ENCODE measurements at regions of chr6 and their contacts with region 1.

Region 1: GRCh38 chr6:82693094-82693493 is 329.5 kb downstream of the TPBG start:
- DNase-seq: no peak
- H3K4me3 ChIP-seq: no peak overlapping the region
- H3K27ac ChIP-seq: no peak overlapping the region
- H3K4me1 ChIP-seq: no peaks in the 10 kb centered on the region
- H3K27me3 ChIP-seq: no peaks in the 10 kb centered on the region
- CTCF ChIP-seq: no peak
- POLR2A ChIP-seq: no peak

Region 2: DNA sequence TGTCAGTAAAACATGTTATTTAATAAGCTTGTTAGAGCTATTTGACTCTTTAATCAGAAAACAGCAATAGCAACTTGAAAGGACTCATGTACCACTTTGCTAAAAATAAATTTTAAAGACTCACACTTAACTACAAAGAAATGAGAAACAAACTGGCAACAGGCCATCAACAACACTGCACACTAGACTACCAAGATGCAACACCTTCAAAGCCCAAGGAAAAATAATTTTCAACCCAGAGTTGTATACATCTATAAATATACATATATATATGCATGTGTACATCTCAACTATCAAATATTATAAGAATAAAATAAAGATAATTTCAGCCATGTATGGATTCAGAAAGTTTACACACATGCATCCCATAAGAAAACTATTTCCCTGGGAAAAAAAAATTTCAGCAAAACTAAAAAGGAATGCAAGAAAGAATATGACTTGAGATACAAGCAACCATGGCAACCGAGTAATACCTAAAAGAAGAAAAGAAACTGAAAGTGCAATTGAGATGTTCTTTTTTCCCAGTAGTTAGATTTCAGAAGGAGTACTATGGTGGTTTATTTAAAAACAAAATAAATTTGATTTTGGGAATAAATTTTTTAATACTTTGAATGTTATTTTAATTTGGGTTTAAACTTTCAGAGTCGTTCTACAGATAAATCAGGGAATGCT is 68.7 kb after region 1 on chr6:
- intact Hi-C with region 1: no loop called
- DNase-seq: no peak
- H3K4me3 ChIP-seq: no peak overlapping the region
- H3K27ac ChIP-seq: no peak overlapping the region
- H3K4me1 ChIP-seq: no peaks in the 10 kb centered on the region
- H3K27me3 ChIP-seq: no peaks in the 10 kb centered on the region
- CTCF ChIP-seq: no peak
- POLR2A ChIP-seq: no peak

Region 3: DNA sequence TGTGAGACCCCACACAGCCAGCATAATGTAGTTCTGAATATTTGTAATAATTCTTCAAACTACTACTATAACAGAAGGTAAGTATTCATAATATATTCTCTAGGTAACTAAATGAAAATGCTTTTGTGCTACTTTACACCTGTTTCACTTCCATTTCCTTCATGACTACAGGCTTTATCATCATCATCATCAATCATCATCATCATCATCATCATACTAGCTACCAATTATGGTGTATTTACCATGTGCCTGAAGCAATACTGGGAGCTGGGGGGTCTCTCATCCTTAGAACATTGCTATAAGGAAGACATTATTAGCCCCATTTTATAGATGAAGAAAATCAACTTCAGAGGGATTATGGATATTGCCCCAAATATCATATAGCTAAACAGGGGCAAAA is 78.7 kb after region 1 on chr6:
- intact Hi-C with region 1: no loop called
- DNase-seq: no peak
- H3K4me3 ChIP-seq: no peak overlapping the region
- H3K27ac ChIP-seq: no peak overlapping the region
- H3K4me1 ChIP-seq: no peaks in the 10 kb centered on the region
- H3K27me3 ChIP-seq: no peaks in the 10 kb centered on the region
- CTCF ChIP-seq: no peak
- POLR2A ChIP-seq: no peak

Region 4: GRCh38 chr6:84093441-84094435 is 1400.6 kb after region 1 on chr6:
- intact Hi-C with region 1: loop called (anchors 10 kb)
- DNase-seq: no peak
- H3K4me3 ChIP-seq: no peak overlapping the region
- H3K27ac ChIP-seq: no peak overlapping the region
- H3K4me1 ChIP-seq: no peaks in the 10 kb centered on the region
- H3K27me3 ChIP-seq: no peaks in the 10 kb centered on the region
- CTCF ChIP-seq: no peak
- POLR2A ChIP-seq: no peak

Measured in breast epithelium (tissue), 4 donors.